ENCODE measurements at regions of chr20 and their contacts with region 1.

Region 1: DNA sequence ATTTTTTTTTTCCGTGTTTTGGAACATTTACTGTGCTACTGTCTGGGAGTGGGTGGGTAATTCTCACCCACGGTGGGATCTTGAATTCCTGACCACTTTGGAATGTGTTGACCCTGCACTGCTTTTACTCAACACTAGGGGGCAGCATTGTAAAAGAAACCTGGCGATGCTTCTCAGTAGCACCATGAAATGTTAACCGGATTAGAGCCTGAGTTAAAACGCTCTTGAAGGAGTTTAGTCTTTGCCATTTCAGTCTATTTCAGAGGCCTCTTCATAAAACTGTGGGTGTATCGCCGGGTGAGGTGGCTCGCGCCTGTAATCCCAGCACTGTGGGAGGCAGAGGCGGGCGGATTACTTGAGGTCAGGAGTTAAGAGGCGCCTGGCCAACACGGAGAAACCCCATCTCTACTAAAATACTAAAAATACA is 114.4 kb upstream of the PRND start:
- ATAC-seq: peak; percentile 72 to 96 (median 84)
- H3K4me3 ChIP-seq: no peak overlapping the region
- H3K27ac ChIP-seq: no peak overlapping the region
- H3K4me1 ChIP-seq: no peaks in the 10 kb centered on the region

Region 2: DNA sequence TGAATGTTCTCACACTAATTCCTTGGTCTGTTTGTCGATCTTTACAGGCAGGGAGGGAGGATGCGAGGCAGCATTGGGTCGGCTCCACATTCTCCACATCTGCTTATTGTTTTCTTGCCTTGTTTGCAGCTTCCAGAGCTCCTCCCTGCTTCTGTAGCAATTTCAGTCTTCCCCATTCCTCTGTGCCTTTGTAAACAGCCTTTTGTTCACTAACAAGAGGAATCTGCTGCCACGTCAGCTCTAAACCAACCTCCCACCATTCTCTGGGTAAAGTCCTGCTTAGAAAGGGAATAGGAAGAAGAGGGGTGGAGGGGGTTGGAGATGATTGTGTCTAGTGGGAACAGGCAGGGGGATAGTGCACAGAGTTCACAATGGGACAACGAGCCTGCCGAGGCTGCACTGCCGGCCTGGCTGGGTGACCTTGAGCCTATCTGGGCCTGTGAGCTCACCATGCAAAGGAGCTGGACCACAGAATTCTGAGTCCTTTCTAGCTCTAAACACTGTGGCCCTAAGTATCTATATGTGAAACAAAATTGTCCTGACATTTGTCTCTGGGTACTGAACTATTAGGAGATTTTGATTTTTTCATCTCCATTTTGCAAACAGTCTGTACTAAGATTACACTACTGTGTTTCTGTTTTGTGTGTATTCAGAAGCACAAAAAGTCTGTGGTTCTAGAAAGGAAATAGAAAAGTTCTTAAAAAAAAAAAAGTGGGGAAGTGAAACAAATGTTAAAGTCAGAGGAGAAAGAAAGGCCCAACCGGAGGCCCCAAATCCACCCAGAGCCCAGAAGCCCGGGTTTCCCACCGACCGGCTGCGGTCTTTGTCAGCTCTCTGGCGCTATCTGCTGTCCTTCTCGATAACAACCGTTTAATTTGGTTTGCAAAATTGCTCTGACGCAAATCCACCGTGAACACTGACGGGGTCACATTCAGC is 113.0 kb after region 1 on chr20:
- in situ Hi-C with region 1: loop called in 4 of 9 experiments (anchors 10 kb)
- ATAC-seq: peak; percentile 39 to 91 (median 87)
- H3K4me3 ChIP-seq: no peak overlapping the region
- H3K27ac ChIP-seq: peak overlapping the region; percentile 44 to 71
- H3K4me1 ChIP-seq: peaks cover 4 to 7% of the 10 kb centered on the region in 2 donors

Region 3: DNA sequence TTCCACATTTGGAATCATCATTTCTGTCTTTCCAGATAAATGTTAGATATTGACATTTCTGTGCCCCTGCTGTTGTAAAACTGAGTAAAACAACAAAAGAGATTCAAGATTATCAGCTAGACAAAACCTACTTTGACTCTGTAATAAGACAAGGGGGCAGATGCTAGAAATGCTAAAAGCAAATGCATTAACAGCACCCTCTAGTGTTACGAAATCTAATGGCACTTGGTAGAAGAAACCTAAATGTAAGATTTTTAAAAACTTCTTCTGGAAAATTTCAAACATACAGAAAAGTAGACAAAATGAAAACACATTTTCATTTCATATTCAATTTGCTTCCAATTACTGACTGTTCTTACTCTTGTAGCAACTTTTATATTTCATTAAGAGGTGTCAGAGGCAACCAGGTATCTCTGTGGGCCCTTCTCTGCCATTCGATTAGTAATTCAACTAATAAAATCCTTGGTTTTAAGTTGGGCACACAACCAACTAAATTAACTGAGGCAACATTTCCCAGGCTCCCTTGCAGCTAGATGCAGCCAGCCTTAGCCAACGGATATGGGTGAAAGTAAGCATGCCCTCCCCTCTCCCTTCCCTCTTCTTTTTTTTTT is 349.0 kb after region 1 on chr20:
- in situ Hi-C with region 1: loop called in 1 of 9 experiments (anchors 25 kb)
- ATAC-seq: peak in 3 of 8 experiments; percentile 33 to 55 (median 41)
- H3K4me3 ChIP-seq: no peak overlapping the region
- H3K27ac ChIP-seq: no peak overlapping the region
- H3K4me1 ChIP-seq: no peaks in the 10 kb centered on the region

Region 4: GRCh38 chr20:5090191-5090590 is 482.9 kb after region 1 on chr20:
- in situ Hi-C with region 1: loop called in 1 of 9 experiments (anchors 10 kb)
- ATAC-seq: no peak
- H3K4me3 ChIP-seq: no peak overlapping the region
- H3K27ac ChIP-seq: no peak overlapping the region
- H3K4me1 ChIP-seq: no peaks in the 10 kb centered on the region

Measured in motor neuron (in vitro differentiated cells).